Activated CD4-positive, alpha-beta T cell treated with anti-CD3 and anti-CD28 coated beads for 36 hours (primary cell): ENCODE measurements at regions of chr4 and their contacts with region 1.

Region 1: GRCh38 chr4:105708530-105709391 is at the starts of genes GSTCD and INTS12:
- DNase-seq: peak; percentile 93
- ATAC-seq: peak; percentile 93
- H3K4me3 Mint-ChIP-seq: peak within 1 kb of the TSS; percentile 98
- H3K27ac Mint-ChIP-seq: peak within 1 kb of the TSS; percentile 96
- H3K4me1 Mint-ChIP-seq: peaks cover 26% of the 10 kb centered on the region
- H3K27me3 Mint-ChIP-seq: no peaks in the 10 kb centered on the region
- total RNA-seq, gene GSTCD: 16.1 to 16.3 TPM
- total RNA-seq, gene INTS12: 20.2 to 28.4 TPM

Region 2: GRCh38 chr4:105140684-105141490 is 567.9 kb before region 1 on chr4:
- CTCF ChIA-PET with region 1: no interaction called
- POLR2A ChIA-PET with region 1: no interaction called
- intact Hi-C with region 1: loop called (anchors 2 to 5 kb)
- DNase-seq: peak; percentile 53
- ATAC-seq: no peak
- H3K4me3 Mint-ChIP-seq: no peak overlapping the region
- H3K27ac Mint-ChIP-seq: no peak overlapping the region
- H3K4me1 Mint-ChIP-seq: peaks cover 23% of the 10 kb centered on the region
- H3K27me3 Mint-ChIP-seq: no peaks in the 10 kb centered on the region

Region 3: GRCh38 chr4:105389167-105389566 is 319.6 kb before region 1 on chr4:
- CTCF ChIA-PET with region 1: no interaction called
- POLR2A ChIA-PET with region 1: no interaction called
- intact Hi-C with region 1: no loop called
- DNase-seq: no peak
- ATAC-seq: peak; percentile 36
- H3K4me3 Mint-ChIP-seq: no peak overlapping the region
- H3K27ac Mint-ChIP-seq: no peak overlapping the region
- H3K4me1 Mint-ChIP-seq: peaks cover 4% of the 10 kb centered on the region
- H3K27me3 Mint-ChIP-seq: no peaks in the 10 kb centered on the region

Region 4: DNA sequence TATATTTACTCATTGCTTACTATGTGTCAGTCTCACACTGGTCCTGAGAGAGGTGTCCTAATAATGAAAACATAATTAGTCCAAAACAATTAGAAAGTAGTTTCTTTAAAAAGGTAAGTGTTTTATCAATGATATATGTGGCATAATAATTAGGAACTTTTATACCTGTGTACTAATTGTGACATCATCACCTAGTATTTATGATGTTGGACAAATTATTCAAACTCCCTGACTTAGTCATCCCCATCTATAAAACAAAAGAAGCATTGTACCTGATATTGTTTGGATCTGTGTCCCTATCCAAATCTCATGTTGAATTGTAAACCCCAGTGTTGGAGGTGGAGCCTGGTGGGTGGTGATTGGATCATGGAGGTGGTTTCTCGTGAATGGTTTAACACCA is 172.2 kb before region 1 on chr4:
- CTCF ChIA-PET with region 1: no interaction called
- POLR2A ChIA-PET with region 1: no interaction called
- intact Hi-C with region 1: no loop called
- DNase-seq: no peak
- ATAC-seq: no peak
- H3K4me3 Mint-ChIP-seq: no peak overlapping the region
- H3K27ac Mint-ChIP-seq: no peak overlapping the region
- H3K4me1 Mint-ChIP-seq: peaks cover 5% of the 10 kb centered on the region
- H3K27me3 Mint-ChIP-seq: peaks cover 9% of the 10 kb centered on the region

Region 5: DNA sequence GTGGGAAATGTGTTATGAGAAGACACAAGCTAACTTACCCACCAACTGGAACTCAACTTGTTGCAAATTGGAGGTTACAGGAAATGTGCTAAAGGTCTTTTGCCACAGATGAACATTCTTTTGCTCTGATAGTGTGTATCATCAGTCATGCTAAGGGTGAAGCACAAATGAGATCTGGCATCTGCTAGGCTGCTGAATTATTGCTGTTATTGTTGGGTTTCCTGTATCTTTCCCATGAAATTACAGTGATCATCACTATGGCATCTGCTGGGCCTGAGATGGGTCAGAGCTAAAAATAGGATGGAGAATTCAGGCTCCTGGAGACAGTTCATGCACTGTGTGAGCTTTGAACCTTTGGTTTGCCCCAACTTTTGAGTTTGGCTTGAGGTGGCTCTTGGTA is 311.0 kb after region 1 on chr4:
- CTCF ChIA-PET with region 1: no interaction called
- POLR2A ChIA-PET with region 1: no interaction called
- intact Hi-C with region 1: no loop called
- DNase-seq: no peak
- ATAC-seq: no peak
- H3K4me3 Mint-ChIP-seq: no peak overlapping the region
- H3K27ac Mint-ChIP-seq: no peak overlapping the region
- H3K4me1 Mint-ChIP-seq: no peaks in the 10 kb centered on the region
- H3K27me3 Mint-ChIP-seq: no peaks in the 10 kb centered on the region

Region 6: DNA sequence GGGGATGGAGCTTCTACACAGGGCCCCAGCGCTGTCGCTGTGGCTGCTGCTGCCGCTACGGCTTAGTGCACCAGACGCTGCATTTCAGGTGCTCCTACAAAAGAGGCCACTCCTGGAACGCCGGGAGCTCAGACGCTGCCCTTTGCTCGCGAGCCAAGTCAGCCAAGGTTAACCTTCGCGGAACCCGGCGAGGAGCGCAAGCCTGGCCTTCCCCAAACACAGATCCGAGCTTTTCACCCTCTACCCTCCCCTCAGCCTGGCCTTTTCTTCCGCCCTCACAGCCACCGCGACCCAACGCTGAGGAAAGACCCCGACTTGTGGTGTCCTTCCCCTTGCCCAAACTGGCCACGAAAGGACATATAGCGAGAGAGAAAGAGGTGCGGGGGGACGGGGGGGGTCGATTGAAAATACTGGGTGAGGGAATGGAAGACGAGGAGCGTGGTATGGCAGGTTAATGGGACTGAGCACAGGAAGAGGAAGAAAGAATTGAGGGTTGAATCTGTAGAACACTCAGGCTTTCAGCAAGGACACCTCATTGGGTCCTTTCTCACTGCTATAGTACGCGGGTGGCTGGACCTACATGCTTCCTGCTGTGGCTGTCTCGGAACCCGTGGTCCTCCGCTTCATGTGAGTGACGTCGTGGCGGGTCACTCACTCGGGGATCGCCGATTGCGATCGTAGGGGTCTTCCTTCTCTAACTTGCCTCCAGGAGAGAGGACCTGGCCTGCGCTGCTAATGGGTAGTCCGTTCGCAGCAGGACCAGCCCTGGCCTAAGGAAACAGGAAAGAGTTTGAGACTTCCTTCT is 607.4 kb after region 1 on chr4 and contains the starts of genes AIMP1 and TBCK:
- CTCF ChIA-PET with region 1: no interaction called
- POLR2A ChIA-PET with region 1: no interaction called
- intact Hi-C with region 1: loop called (anchors 2 to 10 kb)
- DNase-seq: peak; percentile 91
- ATAC-seq: peak; percentile 83
- H3K4me3 Mint-ChIP-seq: no peak within 1 kb of the TSS
- H3K27ac Mint-ChIP-seq: no peak within 1 kb of the TSS
- H3K4me1 Mint-ChIP-seq: peaks cover 49% of the 10 kb centered on the region
- H3K27me3 Mint-ChIP-seq: no peaks in the 10 kb centered on the region
- total RNA-seq, gene AIMP1: 41.9 to 69.5 TPM
- total RNA-seq, gene TBCK: 22.5 to 25.1 TPM